ENCODE measurements at regions of chr7 and their contacts with region 1.

Region 1: DNA sequence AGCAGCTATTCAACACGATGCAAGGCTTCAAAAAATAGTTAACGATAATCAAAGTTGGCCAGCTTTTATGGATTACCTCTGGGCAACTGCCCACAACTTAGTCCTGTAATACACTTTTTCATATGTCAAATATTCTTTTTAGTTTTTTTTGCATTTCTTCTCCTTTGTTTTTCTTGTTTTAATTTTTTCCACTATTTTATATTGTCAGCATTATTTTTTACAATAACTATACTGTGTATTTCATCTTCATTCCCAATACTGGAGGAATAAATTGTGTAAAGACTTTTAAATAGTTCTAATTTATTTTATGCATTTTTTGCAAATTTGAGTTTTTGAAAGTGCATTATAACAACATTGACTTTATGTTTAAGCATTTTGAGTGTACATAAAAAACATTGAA is 18.5 kb upstream of the CTAGE4 start:
- DNase-seq: no peak
- ATAC-seq: no peak
- H3K4me3 Mint-ChIP-seq: no peak overlapping the region
- H3K27ac Mint-ChIP-seq: no peak overlapping the region
- H3K4me1 Mint-ChIP-seq: no peaks in the 10 kb centered on the region
- H3K27me3 Mint-ChIP-seq: peaks cover 12% of the 10 kb centered on the region
- CTCF ChIP-seq: no peak

Region 2: DNA sequence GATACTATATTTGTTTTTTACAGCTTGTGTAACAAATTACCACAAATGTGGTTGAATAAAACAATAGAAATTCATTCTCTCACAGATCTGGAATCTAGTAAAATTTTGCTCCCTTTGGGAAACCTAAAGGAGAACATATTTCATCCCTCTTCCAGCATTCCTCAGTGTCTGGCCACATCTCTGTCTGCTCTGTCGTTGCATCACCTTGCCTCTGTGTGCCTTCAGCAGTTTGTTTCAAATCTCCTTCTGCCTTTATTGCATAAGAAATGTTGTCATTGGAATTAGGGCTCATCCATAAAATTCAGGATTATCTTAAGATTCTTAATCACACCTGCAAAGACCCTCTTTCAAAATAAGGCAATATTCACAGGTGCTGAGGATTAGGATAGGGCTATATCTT is 27.3 kb before region 1 on chr7:
- CTCF ChIA-PET with region 1: no interaction called
- POLR2A ChIA-PET with region 1: no interaction called
- intact Hi-C with region 1: loop called (anchors 2 kb)
- DNase-seq: no peak
- ATAC-seq: no peak
- H3K4me3 Mint-ChIP-seq: no peak overlapping the region
- H3K27ac Mint-ChIP-seq: no peak overlapping the region
- H3K4me1 Mint-ChIP-seq: no peaks in the 10 kb centered on the region
- H3K27me3 Mint-ChIP-seq: no peaks in the 10 kb centered on the region
- CTCF ChIP-seq: no peak

Measured in activated B cell treated with CpG ODN at 0.5 μM for 24 hours (primary cell).